Heart left ventricle (tissue), 16 donors: ENCODE measurements at regions of chr12 and their contacts with region 1.

Region 1: GRCh38 chr12:95336390-95337067 is 118.9 kb downstream of the VEZT start:
- DNase-seq: peak; percentile 71 to 76 (median 73)
- ATAC-seq: peak; percentile 84 to 94 (median 90)
- H3K4me3 ChIP-seq: peak overlapping the region in 3 of 12 donors; percentile 10 to 23 (median 22)
- H3K27ac ChIP-seq: peak overlapping the region in 11 of 12 donors; percentile 12 to 79 (median 60)
- H3K4me1 ChIP-seq: peaks cover 0 to 18% (median 4%) of the 10 kb centered on the region in 12 donors
- H3K27me3 ChIP-seq: no peaks in the 10 kb centered on the region
- CTCF ChIP-seq: peak; percentile 61 to 96 (median 88)
- POLR2A ChIP-seq: no peak

Region 2: GRCh38 chr12:94149119-94149780 is 1187.3 kb before region 1 on chr12:
- intact Hi-C with region 1: loop called in 1 of 10 experiments (anchors 10 kb)
- DNase-seq: peak in 4 of 5 donors; percentile 35 to 79 (median 56)
- ATAC-seq: peak in 3 of 4 donors; percentile 29 to 58 (median 50)
- H3K4me3 ChIP-seq: peak overlapping the region; percentile 42 to 80 (median 66)
- H3K27ac ChIP-seq: peak overlapping the region in 3 of 12 donors; percentile 13 to 70 (median 28)
- H3K4me1 ChIP-seq: peaks cover 0 to 51% (median 12%) of the 10 kb centered on the region in 12 donors
- H3K27me3 ChIP-seq: peaks cover 0 to 18% (median 2%) of the 10 kb centered on the region in 9 donors
- CTCF ChIP-seq: peak in 9 of 12 donors; percentile 16 to 51 (median 27)
- POLR2A ChIP-seq: no peak

Region 3: GRCh38 chr12:94545935-94546771 is 790.4 kb before region 1 on chr12:
- intact Hi-C with region 1: loop called in 3 of 10 experiments (anchors 5 to 10 kb)
- DNase-seq: peak in 4 of 5 donors; percentile 32 to 46 (median 39)
- ATAC-seq: peak; percentile 80 to 98 (median 93)
- H3K4me3 ChIP-seq: no peak overlapping the region
- H3K27ac ChIP-seq: no peak overlapping the region
- H3K4me1 ChIP-seq: no peaks in the 10 kb centered on the region
- H3K27me3 ChIP-seq: no peaks in the 10 kb centered on the region
- CTCF ChIP-seq: peak; percentile 62 to 86 (median 79)
- POLR2A ChIP-seq: no peak

Region 4: DNA sequence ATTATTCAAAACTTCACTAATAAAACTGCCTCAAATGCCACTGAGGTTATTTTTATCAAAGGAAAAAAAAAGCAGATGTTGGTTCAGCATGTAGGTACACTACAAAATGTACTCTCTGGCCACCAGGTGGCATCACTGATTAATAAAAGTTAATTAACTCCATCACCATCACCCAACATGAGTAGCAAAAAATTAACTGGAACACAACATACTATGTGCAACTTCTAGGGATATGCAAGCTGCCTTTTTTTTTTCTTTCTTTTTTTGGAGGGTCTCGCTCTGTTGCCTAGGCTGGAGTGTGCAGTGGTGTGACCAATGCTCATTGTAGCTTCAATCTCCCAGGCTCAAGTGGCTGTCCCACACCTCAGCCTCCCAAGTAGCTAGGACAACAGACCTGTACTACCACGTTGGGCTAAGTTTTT is 219.3 kb before region 1 on chr12:
- intact Hi-C with region 1: loop called (anchors 1 to 5 kb)
- DNase-seq: peak in 4 of 5 donors; percentile 50 to 72 (median 67)
- ATAC-seq: peak; percentile 70 to 88 (median 85)
- H3K4me3 ChIP-seq: no peak overlapping the region
- H3K27ac ChIP-seq: peak overlapping the region in 2 of 12 donors; percentile 35 to 40
- H3K4me1 ChIP-seq: peaks cover 0 to 24% (median 9%) of the 10 kb centered on the region in 12 donors
- H3K27me3 ChIP-seq: no peaks in the 10 kb centered on the region
- CTCF ChIP-seq: peak; percentile 62 to 82 (median 77)
- POLR2A ChIP-seq: no peak

Region 5: GRCh38 chr12:95532851-95533250 is 196.3 kb after region 1 on chr12:
- intact Hi-C with region 1: loop called in 3 of 10 experiments (anchors 5 to 10 kb)
- DNase-seq: no peak
- ATAC-seq: no peak
- H3K4me3 ChIP-seq: no peak overlapping the region
- H3K27ac ChIP-seq: no peak overlapping the region
- H3K4me1 ChIP-seq: peaks cover 0 to 2% (median 0%) of the 10 kb centered on the region in 12 donors
- H3K27me3 ChIP-seq: no peaks in the 10 kb centered on the region
- CTCF ChIP-seq: no peak
- POLR2A ChIP-seq: no peak